ENCODE measurements at regions of chr2 and their contacts with region 1.

Region 1: DNA sequence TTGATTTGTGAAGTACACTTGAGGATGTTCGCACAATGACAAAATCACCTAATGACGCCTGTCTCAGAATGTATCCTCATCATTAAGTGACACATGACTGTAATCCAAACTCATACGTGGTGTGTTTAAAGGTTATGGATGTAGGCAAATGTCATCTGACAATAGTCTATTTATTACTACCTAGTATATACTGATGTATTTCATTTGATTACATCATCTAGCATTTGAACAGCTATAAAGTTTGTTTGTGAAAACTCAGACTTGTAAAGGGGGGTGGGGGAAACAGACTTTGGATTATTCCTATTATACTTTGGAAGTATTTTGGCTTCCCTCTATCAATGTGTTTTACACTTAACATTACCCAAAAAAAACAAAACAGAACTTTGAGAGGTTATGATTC is 129.9 kb downstream of the TANC1 start:
- DNase-seq: no peak
- H3K4me3 ChIP-seq: no peak overlapping the region
- H3K27ac ChIP-seq: peak overlapping the region; percentile 46
- H3K4me1 ChIP-seq: peaks cover 22% of the 10 kb centered on the region
- H3K27me3 ChIP-seq: no peaks in the 10 kb centered on the region
- CTCF ChIP-seq: no peak

Region 2: GRCh38 chr2:159755788-159756187 is 657.4 kb after region 1 on chr2:
- CTCF ChIA-PET with region 1: interaction called, 14 read pairs
- dilution Hi-C with region 1: no loop called
- in situ Hi-C with region 1: no loop called
- intact Hi-C with region 1: no loop called
- DNase-seq: peak; percentile 98
- H3K4me3 ChIP-seq: no peak overlapping the region
- H3K27ac ChIP-seq: peak overlapping the region; percentile 12
- H3K4me1 ChIP-seq: peaks cover 12% of the 10 kb centered on the region
- H3K27me3 ChIP-seq: no peaks in the 10 kb centered on the region
- CTCF ChIP-seq: peak; percentile 56 to 60